ENCODE measurements at regions of chr10 and their contacts with region 1.

Region 1: GRCh38 chr10:36313142-36313541 is 671.0 kb upstream of the FZD8 start:
- DNase-seq: no peak
- ATAC-seq: no peak
- H3K4me3 ChIP-seq: no peak overlapping the region
- H3K27ac ChIP-seq: no peak overlapping the region
- H3K4me1 ChIP-seq: no peaks in the 10 kb centered on the region
- H3K27me3 ChIP-seq: no peaks in the 10 kb centered on the region
- CTCF ChIP-seq: no peak

Region 2: GRCh38 chr10:36211856-36212255 is 101.3 kb before region 1 on chr10:
- CTCF ChIA-PET with region 1: interaction called, 16 read pairs
- POLR2A ChIA-PET with region 1: no interaction called
- in situ Hi-C with region 1: no loop called
- intact Hi-C with region 1: no loop called
- DNase-seq: no peak
- ATAC-seq: no peak
- H3K4me3 ChIP-seq: no peak overlapping the region
- H3K27ac ChIP-seq: no peak overlapping the region
- H3K4me1 ChIP-seq: no peaks in the 10 kb centered on the region
- H3K27me3 ChIP-seq: no peaks in the 10 kb centered on the region
- CTCF ChIP-seq: no peak

Measured in Panc1 (cell line).